ENCODE measurements at regions of chr11 and their contacts with region 1.

Region 1: DNA sequence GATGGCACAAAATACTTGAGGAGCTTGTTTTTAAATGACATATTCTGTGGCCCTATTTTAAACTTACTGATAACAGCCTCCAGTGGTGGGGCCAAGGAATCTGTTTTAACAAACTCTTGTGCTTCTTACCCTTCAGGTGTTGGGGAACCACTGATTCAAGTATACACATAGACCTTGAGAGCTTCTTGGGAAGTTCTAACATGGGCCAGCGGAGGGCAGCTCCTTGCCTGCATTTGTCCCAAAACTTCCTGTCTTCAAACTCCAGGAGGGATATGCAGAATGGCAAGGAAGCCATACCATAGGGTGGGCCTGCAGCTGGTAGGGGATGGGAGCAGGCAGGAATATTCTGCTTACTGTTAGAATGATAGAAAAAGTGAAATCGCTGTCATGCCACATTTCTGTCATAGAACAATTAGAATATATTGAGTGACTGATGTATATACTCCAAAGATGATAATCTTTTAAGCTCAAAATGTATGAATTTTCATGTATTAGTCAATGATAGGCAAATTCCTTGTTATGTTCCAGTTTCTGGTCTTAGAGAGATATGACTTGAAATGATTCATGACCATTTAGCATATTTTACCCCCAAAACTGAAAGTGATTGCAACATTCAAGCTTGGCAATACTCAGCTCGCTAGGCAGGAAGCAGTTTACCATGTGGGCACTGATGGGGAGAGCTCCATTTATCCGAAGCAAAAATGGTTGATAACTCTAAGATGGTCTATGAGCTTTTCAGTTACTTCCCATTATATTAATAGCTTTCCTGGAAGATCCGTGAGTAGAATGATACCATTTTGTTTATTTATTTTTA is 9.2 kb downstream of the EXT2 start:
- DNase-seq: no peak
- ATAC-seq: no peak
- H3K4me3 ChIP-seq: no peak overlapping the region
- H3K27ac ChIP-seq: no peak overlapping the region
- H3K4me1 ChIP-seq: peaks cover 0 to 35% (median 13%) of the 10 kb centered on the region in 12 donors
- H3K27me3 ChIP-seq: no peaks in the 10 kb centered on the region
- CTCF ChIP-seq: no peak
- POLR2A ChIP-seq: no peak

Region 2: DNA sequence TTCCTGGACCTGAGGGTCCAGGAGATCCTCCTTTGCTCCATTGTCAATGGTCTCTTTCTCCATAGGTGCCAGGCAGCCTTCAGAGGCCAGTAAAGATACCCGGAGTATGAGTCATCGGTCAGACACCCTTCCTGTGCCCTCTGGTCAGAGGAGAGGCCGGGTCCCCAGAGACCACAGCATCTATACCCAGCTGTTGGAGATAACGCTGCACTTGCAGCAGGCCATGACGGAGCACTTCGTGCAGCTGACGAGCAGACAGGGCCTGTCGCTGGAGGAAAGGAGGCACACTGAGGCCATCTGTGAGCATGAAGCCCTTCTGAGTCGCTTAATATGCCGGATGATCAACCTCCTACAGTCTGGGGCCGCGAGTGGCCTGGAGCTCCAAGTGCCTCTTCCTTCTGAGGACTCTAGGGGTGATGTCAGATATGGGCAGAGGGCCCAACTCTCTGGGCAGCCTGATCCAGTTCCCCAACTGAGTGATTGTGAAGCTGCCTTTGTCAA is 56.7 kb before region 1 on chr11 and contains the start of gene ACCSL:
- intact Hi-C with region 1: loop called in 1 of 10 experiments (anchors 10 kb)
- DNase-seq: no peak
- ATAC-seq: peak in 3 of 4 donors; percentile 28 to 65 (median 50)
- H3K4me3 ChIP-seq: no peak within 1 kb of the TSS
- H3K27ac ChIP-seq: no peak within 1 kb of the TSS
- H3K4me1 ChIP-seq: no peaks in the 10 kb centered on the region
- H3K27me3 ChIP-seq: no peaks in the 10 kb centered on the region
- CTCF ChIP-seq: no peak
- POLR2A ChIP-seq: no peak
- total RNA-seq, gene ACCSL: not detected

Region 3: DNA sequence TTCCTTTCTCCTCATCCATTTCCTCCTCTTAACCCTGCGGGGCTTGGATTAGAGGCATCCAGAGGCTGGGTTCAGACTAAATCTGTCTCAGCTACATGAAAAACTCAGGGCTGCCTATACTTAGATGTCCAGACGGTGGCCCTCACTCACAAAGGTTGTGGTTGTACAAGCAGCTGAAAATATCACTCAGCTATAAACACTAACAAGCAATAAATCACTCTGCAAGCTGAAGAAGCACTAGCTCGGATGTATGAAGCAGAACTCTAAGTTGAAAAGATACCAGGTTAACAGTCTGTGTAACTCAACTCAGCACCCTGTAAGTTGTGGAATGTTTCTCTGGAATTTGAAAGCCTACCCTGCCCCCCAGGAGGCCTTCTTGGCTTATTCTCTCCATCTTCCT is 73.7 kb after region 1 on chr11:
- intact Hi-C with region 1: no loop called
- DNase-seq: peak in 1 of 5 donors; percentile 10
- ATAC-seq: peak in 2 of 4 donors; percentile 59 to 69
- H3K4me3 ChIP-seq: no peak overlapping the region
- H3K27ac ChIP-seq: no peak overlapping the region
- H3K4me1 ChIP-seq: peaks cover 0 to 8% (median 0%) of the 10 kb centered on the region in 12 donors
- H3K27me3 ChIP-seq: no peaks in the 10 kb centered on the region
- CTCF ChIP-seq: peak in 5 of 12 donors; percentile 8 to 35 (median 26)
- POLR2A ChIP-seq: no peak

Region 4: GRCh38 chr11:44269369-44270351 is 165.0 kb after region 1 on chr11:
- intact Hi-C with region 1: loop called in 1 of 10 experiments (anchors 10 kb)
- DNase-seq: no peak
- ATAC-seq: peak in 3 of 4 donors; percentile 18 to 70 (median 34)
- H3K4me3 ChIP-seq: peak overlapping the region in 2 of 12 donors; percentile 30 to 31
- H3K27ac ChIP-seq: peak overlapping the region in 4 of 12 donors; percentile 29 to 54 (median 40)
- H3K4me1 ChIP-seq: peaks cover 0 to 7% (median 0%) of the 10 kb centered on the region in 12 donors
- H3K27me3 ChIP-seq: no peaks in the 10 kb centered on the region
- CTCF ChIP-seq: no peak
- POLR2A ChIP-seq: no peak

Region 5: GRCh38 chr11:44538375-44539054 is 433.8 kb after region 1 on chr11:
- intact Hi-C with region 1: loop called in 5 of 10 experiments (anchors 5 to 10 kb)
- DNase-seq: peak; percentile 76 to 83 (median 80)
- ATAC-seq: peak; percentile 92 to 94 (median 92)
- H3K4me3 ChIP-seq: peak overlapping the region in 3 of 12 donors; percentile 5 to 26 (median 11)
- H3K27ac ChIP-seq: no peak overlapping the region
- H3K4me1 ChIP-seq: peaks cover 0 to 9% (median 0%) of the 10 kb centered on the region in 12 donors
- H3K27me3 ChIP-seq: no peaks in the 10 kb centered on the region
- CTCF ChIP-seq: peak; percentile 90 to 99 (median 96)
- POLR2A ChIP-seq: no peak